Thyroid gland (tissue), 4 donors: ENCODE measurements at regions of chr15 and their contacts with region 1.

Region 1: DNA sequence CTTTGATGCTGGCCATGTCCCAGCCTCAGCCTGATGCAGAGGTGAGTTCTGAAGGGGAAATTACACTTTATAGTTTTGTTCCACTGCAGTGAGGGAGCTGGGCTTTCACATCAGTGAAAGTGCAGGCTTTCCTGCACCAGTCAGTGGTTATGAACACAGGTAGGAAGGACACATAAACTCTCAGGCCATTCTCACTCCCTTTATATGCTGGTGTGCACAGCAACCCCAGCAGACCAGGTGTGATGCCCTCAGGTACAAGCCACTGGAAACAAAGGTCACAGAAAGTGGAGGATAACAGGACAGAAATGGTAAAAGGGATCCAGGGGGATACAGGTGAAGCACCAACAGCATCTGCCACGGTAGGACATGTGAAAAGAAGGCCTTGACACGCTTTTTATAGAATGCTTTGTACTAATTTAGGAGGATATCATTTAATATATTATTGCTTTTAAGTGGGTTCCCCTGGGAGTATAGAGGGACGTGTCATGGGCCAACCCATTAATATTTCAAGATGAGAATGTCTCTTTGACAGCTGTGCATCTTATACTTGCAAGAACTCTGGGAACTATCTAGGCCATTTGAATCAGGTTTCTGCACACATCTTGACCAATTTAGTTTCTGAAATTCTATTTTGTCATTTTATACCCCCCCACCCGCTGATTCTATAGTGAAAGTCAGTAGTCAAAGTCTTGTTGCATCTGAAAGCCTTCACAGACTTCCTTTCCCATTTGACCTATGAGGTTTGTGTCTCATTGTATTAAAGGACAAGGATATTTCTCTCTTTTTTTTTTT is 25.0 kb upstream of the BLM start:
- DNase-seq: no peak
- H3K4me3 ChIP-seq: no peak overlapping the region
- H3K27ac ChIP-seq: no peak overlapping the region
- H3K4me1 ChIP-seq: no peaks in the 10 kb centered on the region
- H3K27me3 ChIP-seq: no peaks in the 10 kb centered on the region
- CTCF ChIP-seq: no peak
- POLR2A ChIP-seq: no peak

Region 2: GRCh38 chr15:90519688-90520087 is 172.5 kb before region 1 on chr15:
- intact Hi-C with region 1: no loop called
- DNase-seq: no peak
- H3K4me3 ChIP-seq: no peak overlapping the region
- H3K27ac ChIP-seq: no peak overlapping the region
- H3K4me1 ChIP-seq: peaks cover 0 to 4% of the 10 kb centered on the region in 2 donors
- H3K27me3 ChIP-seq: no peaks in the 10 kb centered on the region
- CTCF ChIP-seq: no peak
- POLR2A ChIP-seq: no peak

Region 3: GRCh38 chr15:90648137-90649070 is 43.8 kb before region 1 on chr15:
- intact Hi-C with region 1: loop called (anchors 5 kb)
- DNase-seq: peak; percentile 57 to 60
- H3K4me3 ChIP-seq: no peak overlapping the region
- H3K27ac ChIP-seq: peak overlapping the region in 2 of 3 donors; percentile 49 to 68
- H3K4me1 ChIP-seq: peaks cover 0 to 3% of the 10 kb centered on the region in 2 donors
- H3K27me3 ChIP-seq: no peaks in the 10 kb centered on the region
- CTCF ChIP-seq: peak; percentile 74 to 92 (median 88)
- POLR2A ChIP-seq: no peak

Region 4: GRCh38 chr15:90729261-90729660 is 37.1 kb after region 1 on chr15:
- intact Hi-C with region 1: no loop called
- DNase-seq: no peak
- H3K4me3 ChIP-seq: no peak overlapping the region
- H3K27ac ChIP-seq: no peak overlapping the region
- H3K4me1 ChIP-seq: peaks cover 2 to 14% of the 10 kb centered on the region in 2 donors
- H3K27me3 ChIP-seq: no peaks in the 10 kb centered on the region
- CTCF ChIP-seq: no peak
- POLR2A ChIP-seq: no peak

Region 5: DNA sequence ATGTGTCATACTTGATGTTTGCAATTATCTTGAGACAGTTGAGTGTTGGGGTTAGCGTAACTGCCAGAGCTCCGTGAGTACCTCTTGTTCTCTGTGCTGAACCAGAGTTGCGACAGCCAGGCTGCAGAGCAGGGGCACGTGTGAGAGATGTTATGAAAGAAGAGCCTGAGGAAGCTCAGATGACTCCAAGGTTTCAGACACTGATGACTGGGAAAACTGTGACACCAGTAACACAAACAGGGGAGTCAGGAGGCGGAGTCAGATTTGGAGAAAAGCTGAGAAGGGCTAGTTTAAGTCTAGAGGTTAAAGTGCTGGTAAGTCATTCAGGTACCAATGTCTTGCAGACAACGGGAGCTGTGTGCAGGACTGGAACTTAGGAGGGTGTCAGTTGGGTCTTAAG is 69.9 kb after region 1 on chr15:
- intact Hi-C with region 1: no loop called
- DNase-seq: peak; percentile 15 to 20
- H3K4me3 ChIP-seq: no peak overlapping the region
- H3K27ac ChIP-seq: no peak overlapping the region
- H3K4me1 ChIP-seq: no peaks in the 10 kb centered on the region
- H3K27me3 ChIP-seq: no peaks in the 10 kb centered on the region
- CTCF ChIP-seq: no peak
- POLR2A ChIP-seq: no peak